ENCODE measurements at regions of chr6 and their contacts with region 1.

Region 1: GRCh38 chr6:128068116-128068479 is 167.2 kb upstream of the THEMIS start:
- DNase-seq: peak; percentile 45
- ATAC-seq: peak; percentile 96

Region 2: DNA sequence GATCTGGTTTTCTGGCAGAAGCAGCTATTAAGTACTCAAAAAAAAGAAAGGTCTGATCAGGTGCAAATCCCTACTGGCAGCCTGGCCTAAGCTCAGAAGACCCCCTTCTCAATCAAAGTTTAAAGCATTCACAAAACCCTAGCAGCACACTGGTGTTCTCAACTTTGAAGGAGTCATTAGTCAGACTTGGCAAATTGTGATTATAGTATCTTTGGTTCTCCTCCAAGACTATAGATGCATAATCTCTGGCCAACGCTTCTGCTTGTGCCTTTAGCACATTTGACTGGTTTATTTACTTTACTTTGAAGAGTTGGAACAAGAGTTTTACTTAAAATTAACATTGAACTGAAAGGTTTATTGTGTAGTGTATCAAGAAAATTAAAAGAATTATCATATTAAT is 203.4 kb after region 1 on chr6:
- intact Hi-C with region 1: no loop called
- DNase-seq: no peak
- ATAC-seq: no peak

Region 3: DNA sequence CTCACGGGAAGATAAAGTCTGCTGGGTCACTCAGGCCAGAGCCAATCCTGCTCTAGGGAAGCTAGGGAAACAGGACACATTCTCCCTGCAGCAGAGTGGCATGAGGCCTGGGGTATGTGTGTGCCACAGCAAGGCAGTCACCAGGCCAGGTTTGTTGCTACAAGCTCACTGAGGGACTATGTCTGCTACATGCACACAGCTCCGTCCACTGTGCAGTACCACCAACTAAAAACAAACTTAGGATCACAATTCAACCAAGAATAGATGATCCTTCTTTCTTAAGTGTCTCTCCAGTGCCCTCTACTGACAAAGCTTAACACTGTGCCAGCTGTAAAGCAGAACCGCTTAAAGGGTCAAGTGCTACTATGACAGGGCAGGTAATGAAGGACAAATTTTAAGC is 259.8 kb after region 1 on chr6:
- intact Hi-C with region 1: loop called (anchors 10 kb)
- DNase-seq: no peak
- ATAC-seq: peak; percentile 31

Region 4: GRCh38 chr6:129590408-129591022 is 1522.4 kb after region 1 on chr6:
- intact Hi-C with region 1: loop called (anchors 5 kb)
- DNase-seq: no peak
- ATAC-seq: no peak